SK-N-SH (cell line): ENCODE measurements at regions of chr3 and their contacts with region 1.

Region 1: GRCh38 chr3:39146064-39146983 is 7.1 kb downstream of the CSRNP1 start:
- DNase-seq: no peak
- H3K4me3 ChIP-seq: no peak overlapping the region
- H3K27ac ChIP-seq: peak overlapping the region; percentile 31 to 100
- H3K4me1 ChIP-seq: peaks cover 48 to 84% of the 10 kb centered on the region in 2 experiments
- H3K27me3 ChIP-seq: no peaks in the 10 kb centered on the region
- CTCF ChIP-seq: no peak
- EP300 ChIP-seq: no peak
- RAD21 ChIP-seq: no peak

Region 2: DNA sequence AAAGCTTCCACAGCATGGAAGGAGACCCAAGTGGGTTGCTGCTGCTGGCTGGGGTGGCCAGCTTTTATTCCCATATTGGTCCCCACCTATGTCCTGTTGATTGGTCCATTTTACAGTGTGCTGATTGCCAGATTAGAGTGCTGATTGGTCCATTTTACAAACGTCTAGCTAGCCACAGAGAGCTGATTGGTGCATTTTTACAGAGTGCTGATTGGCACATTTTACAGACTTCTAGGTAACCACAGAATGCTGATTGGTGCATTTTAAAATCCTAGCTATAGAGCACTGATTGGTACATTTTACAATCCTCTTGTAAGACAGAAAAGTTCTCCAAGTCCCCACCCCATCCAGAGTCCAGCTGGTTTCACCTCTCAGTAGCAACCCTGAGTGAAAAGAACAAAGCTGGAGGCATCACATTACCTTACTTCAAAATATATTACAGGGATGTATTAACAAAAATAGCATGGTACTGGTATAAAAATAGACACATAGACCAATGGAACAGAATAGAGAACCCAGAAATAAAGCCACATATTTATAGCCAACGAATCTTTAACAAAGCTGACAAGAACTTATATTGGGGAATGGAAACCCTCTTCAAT is 700.1 kb before region 1 on chr3:
- CTCF ChIA-PET with region 1: no interaction called
- POLR2A ChIA-PET with region 1: no interaction called
- DNase-seq: no peak
- H3K4me3 ChIP-seq: no peak overlapping the region
- H3K27ac ChIP-seq: no peak overlapping the region
- H3K4me1 ChIP-seq: no peaks in the 10 kb centered on the region
- H3K27me3 ChIP-seq: no peaks in the 10 kb centered on the region
- CTCF ChIP-seq: no peak
- EP300 ChIP-seq: no peak
- RAD21 ChIP-seq: no peak

Region 3: DNA sequence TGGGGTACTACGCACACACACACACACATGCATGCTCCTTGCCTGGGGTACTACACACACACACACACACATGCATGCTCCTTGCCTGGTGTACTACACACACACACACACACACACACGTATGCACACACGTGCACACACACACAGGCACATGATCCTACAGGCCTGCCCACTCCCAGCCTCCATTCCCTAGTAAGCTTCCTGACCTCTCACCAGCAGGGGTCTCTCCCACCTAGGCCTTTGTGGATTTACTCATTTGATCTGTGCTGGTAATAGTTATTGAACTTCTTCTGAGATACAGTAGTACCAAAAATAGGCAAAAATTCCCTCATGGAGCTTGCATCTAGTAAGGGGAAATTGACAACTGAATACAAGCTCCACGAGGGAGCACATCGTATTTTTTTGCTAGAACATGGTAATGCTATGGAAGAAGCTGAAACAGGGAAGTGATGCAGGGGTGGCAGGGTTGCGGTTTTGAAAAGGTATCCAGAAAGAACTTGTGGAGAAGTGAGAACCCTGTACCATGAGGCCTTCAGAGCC is 19.7 kb before region 1 on chr3:
- CTCF ChIA-PET with region 1: interaction called, 18 read pairs
- POLR2A ChIA-PET with region 1: no interaction called
- DNase-seq: peak; percentile 52
- H3K4me3 ChIP-seq: no peak overlapping the region; a peak in 1 of 4 replicates
- H3K27ac ChIP-seq: no peak overlapping the region
- H3K4me1 ChIP-seq: 0 out of 4 replicates have a peak, but pooled peaks cover 0 to 6% of the 10 kb centered on the region in 2 experiments
- H3K27me3 ChIP-seq: no peaks in the 10 kb centered on the region
- CTCF ChIP-seq: peak; percentile 74
- EP300 ChIP-seq: no peak
- RAD21 ChIP-seq: peak; percentile 80